Activated CD4-positive, alpha-beta T cell treated with anti-CD3 and anti-CD28 coated beads, Interleukin-2, amount 10 ng/mL, durations not matched to agents 24 days and 14 days (primary cell): ENCODE measurements at regions of chr3 and their contacts with region 1.

Region 1: GRCh38 chr3:196412704-196413103 is 19.5 kb downstream of the UBXN7 start:
- DNase-seq: no peak
- H3K4me3 Mint-ChIP-seq: no peak overlapping the region
- H3K27ac Mint-ChIP-seq: peak overlapping the region; percentile 1
- H3K4me1 Mint-ChIP-seq: peaks cover 26% of the 10 kb centered on the region
- H3K27me3 Mint-ChIP-seq: no peaks in the 10 kb centered on the region

Region 2: GRCh38 chr3:196432137-196432879 is 19.6 kb after region 1 on chr3 and contains the start of gene UBXN7:
- intact Hi-C with region 1: loop called (anchors 1 kb)
- DNase-seq: peak; percentile 98
- H3K4me3 Mint-ChIP-seq: peak within 1 kb of the TSS; percentile 85
- H3K27ac Mint-ChIP-seq: peak within 1 kb of the TSS; percentile 97
- H3K4me1 Mint-ChIP-seq: peaks cover 20% of the 10 kb centered on the region
- H3K27me3 Mint-ChIP-seq: no peaks in the 10 kb centered on the region
- total RNA-seq, gene UBXN7: 65.5 and 70.8 TPM in 2 replicates